PC-9 (cell line): ENCODE measurements at regions of chr19 and their contacts with region 1.

Region 1: GRCh38 chr19:6481541-6482342 is at the start of gene DENND1C:
- DNase-seq: no peak
- H3K4me3 ChIP-seq: no peak within 1 kb of the TSS
- H3K27ac ChIP-seq: no peak within 1 kb of the TSS
- H3K4me1 ChIP-seq: peaks cover 11% of the 10 kb centered on the region; the same call in 1 of the 2 replicates
- H3K27me3 ChIP-seq: no peaks in the 10 kb centered on the region
- CTCF ChIP-seq: peak; percentile 57
- total RNA-seq, gene DENND1C: not detected in 2 replicates

Region 2: GRCh38 chr19:5503598-5503997 is 978.1 kb before region 1 on chr19:
- CTCF ChIA-PET with region 1: no interaction called
- POLR2A ChIA-PET with region 1: no interaction called
- intact Hi-C with region 1: no loop called
- DNase-seq: no peak
- H3K4me3 ChIP-seq: no peak overlapping the region
- H3K27ac ChIP-seq: no peak overlapping the region
- H3K4me1 ChIP-seq: no peaks in the 10 kb centered on the region
- H3K27me3 ChIP-seq: no peaks in the 10 kb centered on the region
- CTCF ChIP-seq: no peak

Region 3: GRCh38 chr19:6466526-6467248 is 15.1 kb before region 1 on chr19:
- CTCF ChIA-PET with region 1: no interaction called
- POLR2A ChIA-PET with region 1: no interaction called
- intact Hi-C with region 1: no loop called
- DNase-seq: no peak
- H3K4me3 ChIP-seq: no peak overlapping the region
- H3K27ac ChIP-seq: no peak overlapping the region
- H3K4me1 ChIP-seq: peaks cover 5% of the 10 kb centered on the region
- H3K27me3 ChIP-seq: no peaks in the 10 kb centered on the region
- CTCF ChIP-seq: no peak

Region 4: GRCh38 chr19:6613711-6614110 is 132.0 kb after region 1 on chr19:
- CTCF ChIA-PET with region 1: no interaction called
- POLR2A ChIA-PET with region 1: interaction called, 19 read pairs
- intact Hi-C with region 1: no loop called
- DNase-seq: peak in 1 of 2 experiments; percentile 39
- H3K4me3 ChIP-seq: no peak overlapping the region
- H3K27ac ChIP-seq: no peak overlapping the region
- H3K4me1 ChIP-seq: peaks cover 13% of the 10 kb centered on the region; the same call in 1 of the 2 replicates
- H3K27me3 ChIP-seq: no peaks in the 10 kb centered on the region
- CTCF ChIP-seq: no peak